Activated naive CD4-positive, alpha-beta T cell treated with anti-CD3 and anti-CD28 coated beads, Interleukin-2, amount 10 ng/mL, durations not matched to agents 7 days and 5 days (primary cell): ENCODE measurements at regions of chr20 and their contacts with region 1.

Region 1: DNA sequence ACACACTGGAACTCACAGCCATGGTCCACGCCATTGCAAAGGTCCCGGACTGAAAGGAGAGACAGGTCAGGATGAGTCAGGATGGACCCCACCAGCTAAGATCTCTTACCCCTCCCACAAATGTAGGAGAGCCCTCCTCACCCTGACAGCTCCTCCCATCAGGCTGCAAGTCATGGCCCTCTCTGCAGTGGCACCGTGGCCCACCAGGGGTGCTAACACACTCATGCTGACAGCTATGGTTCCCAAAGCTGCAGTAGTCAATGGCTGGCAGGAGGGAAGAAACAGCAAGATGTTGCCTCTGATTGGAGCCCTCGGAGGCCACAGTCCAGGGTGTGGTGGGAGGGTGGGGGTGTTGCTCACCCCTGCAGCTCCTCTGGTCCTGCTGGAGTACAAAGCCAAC is 5.7 kb upstream of the RBPJL start:
- DNase-seq: peak; percentile 58
- H3K4me3 Mint-ChIP-seq: no peak overlapping the region
- H3K27ac Mint-ChIP-seq: no peak overlapping the region
- H3K4me1 Mint-ChIP-seq: peaks cover 2% of the 10 kb centered on the region
- H3K27me3 Mint-ChIP-seq: peaks cover 58% of the 10 kb centered on the region

Region 2: DNA sequence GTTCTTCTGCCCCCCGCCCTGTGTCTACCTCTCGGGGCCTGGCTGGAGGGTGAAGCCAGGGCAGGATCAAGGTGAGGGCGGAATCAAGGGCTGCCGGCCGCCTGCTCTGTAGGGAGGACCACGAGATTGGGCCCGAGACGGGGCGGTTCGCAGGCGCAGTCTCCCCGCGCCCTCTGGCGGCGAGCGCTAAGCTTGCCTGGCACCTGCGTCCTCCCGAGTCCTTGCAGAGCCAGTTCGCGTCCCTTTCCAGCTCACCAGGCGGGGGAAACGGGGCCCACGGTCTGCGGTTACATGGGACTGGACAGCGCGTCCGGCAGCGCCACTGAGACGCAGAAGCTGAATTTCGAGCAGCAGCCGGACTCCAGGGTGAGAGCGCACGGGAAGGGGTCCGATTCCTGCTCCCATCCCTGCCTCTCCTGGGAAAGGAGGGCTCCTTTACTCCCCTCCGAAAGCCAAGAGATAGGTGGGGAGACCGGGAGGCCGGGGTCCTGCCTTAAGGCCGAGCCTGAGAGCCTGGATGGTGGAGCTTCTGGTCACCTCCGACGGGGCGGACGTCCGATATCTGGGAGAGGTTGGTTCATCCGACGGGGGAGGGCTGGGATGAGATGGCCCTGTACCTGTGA is 10.7 kb after region 1 on chr20:
- CTCF ChIA-PET with region 1: interaction called, 31 read pairs
- DNase-seq: peak; percentile 72
- H3K4me3 Mint-ChIP-seq: no peak overlapping the region
- H3K27ac Mint-ChIP-seq: no peak overlapping the region
- H3K4me1 Mint-ChIP-seq: peaks cover 17% of the 10 kb centered on the region
- H3K27me3 Mint-ChIP-seq: peaks cover 97% of the 10 kb centered on the region